T-cell (primary cell): ENCODE measurements at regions of chr2 and their contacts with region 1.

Region 1: DNA sequence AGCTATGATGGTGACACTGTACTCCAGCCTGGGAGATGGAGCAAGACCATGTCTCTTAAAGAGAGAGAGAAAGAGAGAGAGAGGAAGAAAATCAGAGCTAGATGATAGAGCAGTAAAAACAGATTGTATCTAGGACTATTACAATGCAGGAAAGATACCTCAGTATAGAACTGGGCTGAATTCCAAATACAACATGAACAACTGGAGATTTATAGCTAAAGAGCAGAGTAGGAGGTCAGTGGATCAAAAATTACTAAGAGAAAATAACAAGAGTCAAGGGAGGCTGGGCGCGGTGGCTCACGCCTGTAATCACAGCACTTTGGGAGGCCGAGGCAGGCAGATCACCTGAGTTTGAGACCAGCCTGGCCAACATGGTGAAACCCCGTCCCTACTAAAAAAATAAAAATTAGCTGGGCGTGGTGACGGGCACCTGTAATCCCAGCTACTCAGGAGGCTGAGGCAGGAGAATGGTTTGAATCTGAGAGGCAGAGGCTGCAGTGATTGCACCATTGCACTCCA is 100.7 kb upstream of the MSH6 start:
- DNase-seq: no peak
- ATAC-seq: no peak
- H3K4me3 ChIP-seq: no peak overlapping the region
- H3K4me3 Mint-ChIP-seq: no peak overlapping the region
- H3K27ac ChIP-seq: no peak overlapping the region
- H3K27ac Mint-ChIP-seq: no peak overlapping the region
- H3K4me1 ChIP-seq: no peaks in the 10 kb centered on the region
- H3K4me1 Mint-ChIP-seq: no peaks in the 10 kb centered on the region
- H3K27me3 ChIP-seq: no peaks in the 10 kb centered on the region
- H3K27me3 Mint-ChIP-seq: peaks cover 3 to 7% of the 10 kb centered on the region in 2 donors

Region 2: GRCh38 chr2:47237375-47237821 is 444.9 kb before region 1 on chr2:
- CTCF ChIA-PET with region 1: no interaction called
- POLR2A ChIA-PET with region 1: no interaction called
- DNase-seq: no peak
- ATAC-seq: no peak
- H3K4me3 ChIP-seq: no peak overlapping the region
- H3K4me3 Mint-ChIP-seq: no peak overlapping the region
- H3K27ac ChIP-seq: no peak overlapping the region
- H3K27ac Mint-ChIP-seq: no peak overlapping the region
- H3K4me1 ChIP-seq: no peaks in the 10 kb centered on the region
- H3K4me1 Mint-ChIP-seq: no peaks in the 10 kb centered on the region
- H3K27me3 ChIP-seq: no peaks in the 10 kb centered on the region
- H3K27me3 Mint-ChIP-seq: peaks cover 0 to 8% of the 10 kb centered on the region in 2 donors

Region 3: GRCh38 chr2:47656715-47657600 is 25.3 kb before region 1 on chr2:
- CTCF ChIA-PET with region 1: no interaction called
- POLR2A ChIA-PET with region 1: interaction called in 1 of 2 experiments, 10 read pairs
- DNase-seq: no peak
- ATAC-seq: no peak
- H3K4me3 ChIP-seq: no peak overlapping the region
- H3K4me3 Mint-ChIP-seq: no peak overlapping the region
- H3K27ac ChIP-seq: no peak overlapping the region
- H3K27ac Mint-ChIP-seq: no peak overlapping the region
- H3K4me1 ChIP-seq: no peaks in the 10 kb centered on the region
- H3K4me1 Mint-ChIP-seq: no peaks in the 10 kb centered on the region
- H3K27me3 ChIP-seq: no peaks in the 10 kb centered on the region
- H3K27me3 Mint-ChIP-seq: peaks cover 0 to 6% of the 10 kb centered on the region in 2 donors

Region 4: GRCh38 chr2:48482313-48482712 is 800.0 kb after region 1 on chr2:
- CTCF ChIA-PET with region 1: no interaction called
- POLR2A ChIA-PET with region 1: no interaction called
- DNase-seq: no peak
- ATAC-seq: no peak
- H3K4me3 ChIP-seq: no peak overlapping the region
- H3K4me3 Mint-ChIP-seq: no peak overlapping the region
- H3K27ac ChIP-seq: no peak overlapping the region
- H3K27ac Mint-ChIP-seq: no peak overlapping the region
- H3K4me1 ChIP-seq: no peaks in the 10 kb centered on the region
- H3K4me1 Mint-ChIP-seq: no peaks in the 10 kb centered on the region
- H3K27me3 ChIP-seq: no peaks in the 10 kb centered on the region
- H3K27me3 Mint-ChIP-seq: no peaks in the 10 kb centered on the region